ENCODE measurements at regions of chr1 and their contacts with region 1.

Region 1: GRCh38 chr1:243850452-243851256 is 611 bp upstream of the AKT3 start:
- DNase-seq: peak; percentile 85
- H3K4me3 Mint-ChIP-seq: peak overlapping the region; percentile 88
- H3K27ac Mint-ChIP-seq: peak overlapping the region; percentile 46
- H3K4me1 Mint-ChIP-seq: peaks cover 20% of the 10 kb centered on the region
- H3K27me3 Mint-ChIP-seq: peaks cover 64% of the 10 kb centered on the region
- CTCF ChIP-seq: no peak

Region 2: DNA sequence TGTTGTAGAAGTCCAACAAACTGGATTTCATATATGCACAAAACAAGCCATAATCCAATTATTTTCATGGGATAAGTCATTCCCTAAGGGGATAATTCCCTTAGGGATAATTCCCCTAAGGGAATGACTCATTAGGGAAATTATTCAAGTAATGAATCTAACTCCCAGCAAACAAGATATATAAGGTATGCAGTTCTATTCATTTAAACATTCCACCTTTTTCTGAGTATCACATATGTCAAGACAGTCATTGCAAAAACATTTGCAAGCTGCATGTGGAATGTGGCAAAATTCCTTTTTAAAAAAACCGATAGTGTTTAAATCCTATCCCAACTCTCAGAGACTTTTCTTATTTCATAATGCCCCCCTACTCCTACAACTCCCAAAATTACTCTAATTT is 131.8 kb before region 1 on chr1:
- CTCF ChIA-PET with region 1: no interaction called
- POLR2A ChIA-PET with region 1: interaction called, 3 read pairs
- intact Hi-C with region 1: loop called (anchors 5 kb)
- DNase-seq: peak; percentile 35
- H3K4me3 Mint-ChIP-seq: no peak overlapping the region
- H3K27ac Mint-ChIP-seq: peak overlapping the region; percentile 43
- H3K4me1 Mint-ChIP-seq: peaks cover 16% of the 10 kb centered on the region
- H3K27me3 Mint-ChIP-seq: no peaks in the 10 kb centered on the region
- CTCF ChIP-seq: no peak

Region 3: GRCh38 chr1:243798726-243799125 is 51.9 kb before region 1 on chr1:
- CTCF ChIA-PET with region 1: interaction called, 4 read pairs
- POLR2A ChIA-PET with region 1: interaction called, 16 read pairs
- intact Hi-C with region 1: loop called (anchors 2 kb)
- DNase-seq: peak; percentile 86
- H3K4me3 Mint-ChIP-seq: no peak overlapping the region
- H3K27ac Mint-ChIP-seq: peak overlapping the region; percentile 0
- H3K4me1 Mint-ChIP-seq: peaks cover 24% of the 10 kb centered on the region
- H3K27me3 Mint-ChIP-seq: no peaks in the 10 kb centered on the region
- CTCF ChIP-seq: no peak

Region 4: GRCh38 chr1:243924188-243924945 is 73.7 kb after region 1 on chr1:
- CTCF ChIA-PET with region 1: no interaction called
- POLR2A ChIA-PET with region 1: no interaction called
- intact Hi-C with region 1: loop called (anchors 1 kb)
- DNase-seq: peak; percentile 90
- H3K4me3 Mint-ChIP-seq: no peak overlapping the region
- H3K27ac Mint-ChIP-seq: peak overlapping the region; percentile 44
- H3K4me1 Mint-ChIP-seq: peaks cover 17% of the 10 kb centered on the region
- H3K27me3 Mint-ChIP-seq: no peaks in the 10 kb centered on the region
- CTCF ChIP-seq: no peak

Region 5: DNA sequence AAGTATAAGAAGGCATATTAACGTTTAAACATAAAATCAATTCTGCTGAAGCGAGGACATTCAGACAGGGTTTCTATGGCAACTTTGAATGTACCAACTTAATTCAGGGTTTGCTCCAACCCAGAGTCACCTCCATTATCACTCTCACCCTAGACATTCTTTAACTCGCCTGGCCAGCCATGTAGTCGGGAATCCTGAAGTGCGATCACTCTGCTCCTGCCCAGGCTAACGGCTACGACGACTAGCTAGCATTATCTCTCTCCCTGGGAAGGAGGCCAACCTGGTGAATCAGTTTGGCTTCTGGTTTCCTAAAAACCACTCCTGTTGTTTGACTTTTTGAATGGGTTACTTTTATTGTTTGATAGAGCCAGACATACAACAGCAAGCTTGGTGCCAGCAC is 161.5 kb after region 1 on chr1:
- CTCF ChIA-PET with region 1: no interaction called
- POLR2A ChIA-PET with region 1: no interaction called
- intact Hi-C with region 1: loop called (anchors 5 kb)
- DNase-seq: peak; percentile 89
- H3K4me3 Mint-ChIP-seq: peak overlapping the region; percentile 10
- H3K27ac Mint-ChIP-seq: no peak overlapping the region
- H3K4me1 Mint-ChIP-seq: peaks cover 19% of the 10 kb centered on the region
- H3K27me3 Mint-ChIP-seq: no peaks in the 10 kb centered on the region
- CTCF ChIP-seq: no peak

Region 6: DNA sequence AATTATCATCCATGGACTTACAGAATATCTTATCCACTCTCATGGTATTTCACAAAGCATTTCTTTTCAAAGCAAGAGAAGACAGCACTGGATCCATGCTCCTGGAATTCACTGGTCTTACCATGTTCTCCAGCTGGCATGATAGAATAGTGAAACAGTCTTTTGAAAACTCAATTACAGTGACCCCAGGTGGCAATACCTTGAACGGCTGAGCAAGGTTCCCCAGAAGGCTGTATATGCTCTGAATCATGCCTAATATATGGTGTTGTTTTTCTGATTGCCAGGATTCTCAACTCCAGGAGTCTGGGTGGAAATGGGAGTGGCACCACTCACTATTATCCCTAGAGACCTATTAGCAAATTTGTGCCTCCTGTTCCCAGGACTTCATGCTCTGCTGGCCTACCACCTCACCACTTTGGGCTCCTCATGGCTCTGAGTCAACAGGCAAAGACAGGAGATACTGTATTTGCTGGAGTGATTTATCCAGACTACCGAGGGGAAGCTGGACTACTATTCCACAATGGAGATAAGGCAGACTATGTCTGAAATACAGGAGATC is 698.0 kb after region 1 on chr1:
- CTCF ChIA-PET with region 1: no interaction called
- POLR2A ChIA-PET with region 1: no interaction called
- intact Hi-C with region 1: no loop called
- DNase-seq: no peak
- H3K4me3 Mint-ChIP-seq: no peak overlapping the region
- H3K27ac Mint-ChIP-seq: no peak overlapping the region
- H3K4me1 Mint-ChIP-seq: no peaks in the 10 kb centered on the region
- H3K27me3 Mint-ChIP-seq: no peaks in the 10 kb centered on the region
- CTCF ChIP-seq: no peak